ENCODE measurements at regions of chr12 and their contacts with region 1.

Region 1: DNA sequence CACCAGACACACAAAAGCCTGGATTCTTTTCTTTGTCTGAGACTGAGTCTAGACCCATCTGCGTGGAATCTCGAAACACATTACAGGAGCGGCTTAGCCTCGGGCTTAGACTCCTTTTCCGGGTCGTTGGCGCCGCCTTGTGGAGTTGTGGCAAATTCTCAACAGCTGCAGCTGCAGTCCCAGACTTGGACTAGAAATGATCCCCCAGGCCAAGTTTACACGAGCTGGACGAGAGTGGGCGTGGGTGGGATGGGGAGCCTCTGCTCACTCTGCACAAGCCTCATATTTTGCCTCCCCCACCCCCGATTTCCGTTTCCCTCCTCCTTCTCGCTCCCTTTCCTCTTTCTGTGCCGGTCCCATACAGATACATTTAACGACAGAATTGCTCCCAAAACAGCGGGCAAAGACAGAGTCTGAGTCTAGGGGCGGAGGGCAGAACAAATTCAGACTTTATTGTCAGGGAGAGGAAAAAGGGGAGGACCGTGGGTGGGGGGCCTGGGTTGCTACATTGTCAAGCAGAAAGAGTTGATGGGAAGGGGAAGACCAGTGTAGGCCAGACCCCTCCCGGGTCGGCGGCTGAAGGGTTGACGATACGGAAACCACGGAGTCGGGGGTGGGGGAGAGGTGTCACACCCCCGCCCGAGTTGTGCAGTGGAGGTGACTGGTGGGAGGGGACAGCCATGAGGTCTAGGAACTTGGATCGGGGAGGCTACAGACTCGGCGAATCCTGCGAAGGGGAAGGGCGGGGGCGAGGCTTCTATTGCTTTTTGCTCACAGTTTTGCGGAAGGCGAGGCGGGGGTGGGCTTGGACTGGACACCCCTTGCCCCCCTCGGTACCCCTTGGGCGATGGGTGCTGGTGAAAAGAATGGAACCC is 4.7 kb upstream of the GPR84 start:
- DNase-seq: peak; percentile 62 to 94
- H3K4me3 ChIP-seq: peak overlapping the region; percentile 43 to 65
- H3K27ac ChIP-seq: peak overlapping the region; percentile 39 to 60
- H3K4me1 ChIP-seq: peaks cover 4 to 22% of the 10 kb centered on the region in 2 donors
- H3K27me3 ChIP-seq: no peaks in the 10 kb centered on the region
- CTCF ChIP-seq: peak; percentile 82 to 90 (median 86)

Region 2: GRCh38 chr12:54259194-54260011 is 109.5 kb before region 1 on chr12:
- intact Hi-C with region 1: loop called (anchors 10 kb)
- DNase-seq: peak; percentile 38 to 89
- H3K4me3 ChIP-seq: peak overlapping the region; percentile 46 to 58
- H3K27ac ChIP-seq: peak overlapping the region; percentile 68 to 84
- H3K4me1 ChIP-seq: peaks cover 0 to 36% of the 10 kb centered on the region in 2 donors
- H3K27me3 ChIP-seq: no peaks in the 10 kb centered on the region
- CTCF ChIP-seq: no peak

Region 3: GRCh38 chr12:54294152-54294952 is 74.6 kb before region 1 on chr12:
- intact Hi-C with region 1: loop called (anchors 2 kb)
- DNase-seq: peak in 1 of 2 donors; percentile 72
- H3K4me3 ChIP-seq: no peak overlapping the region
- H3K27ac ChIP-seq: no peak overlapping the region
- H3K4me1 ChIP-seq: no peaks in the 10 kb centered on the region
- H3K27me3 ChIP-seq: no peaks in the 10 kb centered on the region
- CTCF ChIP-seq: peak; percentile 60 to 77 (median 70)

Region 4: DNA sequence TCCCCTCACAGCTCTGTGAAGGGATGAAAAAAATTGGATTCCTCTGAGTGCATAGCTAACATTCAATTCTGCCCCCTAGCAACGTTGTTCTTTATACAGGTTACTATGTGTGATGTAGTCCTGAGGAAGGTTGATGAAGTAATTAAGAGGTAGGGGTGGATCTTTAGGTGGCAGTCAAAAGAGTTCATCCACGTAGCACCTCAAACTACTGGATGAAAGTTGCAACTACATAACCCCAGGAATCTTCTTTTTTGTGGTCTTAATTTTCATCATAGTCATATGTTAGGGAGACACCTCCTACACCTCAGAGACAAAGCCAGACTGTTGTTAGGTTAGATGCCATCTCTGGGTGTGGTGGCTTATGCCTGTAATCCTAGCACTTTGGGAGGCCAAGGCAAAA is 57.9 kb before region 1 on chr12:
- intact Hi-C with region 1: no loop called
- DNase-seq: no peak
- H3K4me3 ChIP-seq: no peak overlapping the region
- H3K27ac ChIP-seq: no peak overlapping the region
- H3K4me1 ChIP-seq: no peaks in the 10 kb centered on the region
- H3K27me3 ChIP-seq: no peaks in the 10 kb centered on the region
- CTCF ChIP-seq: no peak

Region 5: GRCh38 chr12:54379401-54380201 is 10.7 kb after region 1 on chr12:
- intact Hi-C with region 1: loop called (anchors 1 kb)
- DNase-seq: peak in 1 of 2 donors; percentile 94
- H3K4me3 ChIP-seq: peak overlapping the region; percentile 42 to 75
- H3K27ac ChIP-seq: peak overlapping the region in 1 of 2 donors; percentile 75
- H3K4me1 ChIP-seq: peaks cover 3 to 4% of the 10 kb centered on the region in 2 donors
- H3K27me3 ChIP-seq: no peaks in the 10 kb centered on the region
- CTCF ChIP-seq: peak; percentile 99 to 100 (median 100)

Region 6: DNA sequence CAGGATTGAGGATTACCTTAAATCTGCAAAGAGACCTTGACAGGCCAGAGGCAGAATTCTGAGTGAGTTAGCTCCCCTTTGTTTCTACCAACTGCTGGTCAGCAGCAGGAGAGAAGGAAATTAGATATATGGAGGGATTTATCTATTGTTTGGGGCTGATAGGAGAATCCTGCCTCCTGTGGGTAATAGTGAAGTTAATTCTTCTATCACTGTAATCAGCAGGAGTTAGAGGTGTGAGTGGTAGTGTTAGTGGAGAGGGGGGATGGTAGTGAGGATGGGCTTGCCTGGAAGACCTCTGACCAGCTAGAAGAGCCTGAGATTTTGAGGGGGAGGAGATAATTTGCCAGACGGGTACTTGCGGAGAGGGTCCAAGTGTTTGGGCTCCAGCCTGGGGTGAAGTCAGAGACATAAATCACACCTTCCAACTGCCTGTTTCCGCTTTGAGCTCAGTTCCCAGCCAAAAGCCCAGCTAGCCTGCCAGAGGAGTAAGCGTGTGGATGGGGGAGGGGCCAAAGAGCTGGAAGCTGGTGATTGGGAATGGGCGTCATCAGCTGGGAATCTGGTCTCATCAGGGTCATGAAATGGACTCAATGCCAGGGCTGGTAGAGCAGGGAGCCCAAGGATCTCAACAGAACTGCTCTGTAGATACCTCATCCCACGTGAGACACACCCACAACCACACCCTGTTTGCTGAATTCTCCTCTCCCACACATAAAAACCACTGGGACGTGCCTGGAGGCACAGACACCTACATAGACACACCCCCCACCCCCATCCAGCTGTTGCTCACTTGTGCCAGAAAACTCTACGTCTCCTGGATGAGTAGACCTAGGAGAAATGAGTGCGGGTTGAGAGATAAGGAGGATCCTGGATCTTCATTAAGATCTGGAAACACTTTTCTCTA is 63.2 kb after region 1 on chr12:
- intact Hi-C with region 1: no loop called
- DNase-seq: peak; percentile 79 to 96
- H3K4me3 ChIP-seq: peak overlapping the region in 1 of 2 donors; percentile 36
- H3K27ac ChIP-seq: peak overlapping the region; percentile 97
- H3K4me1 ChIP-seq: peaks cover 23 to 51% of the 10 kb centered on the region in 2 donors
- H3K27me3 ChIP-seq: no peaks in the 10 kb centered on the region
- CTCF ChIP-seq: no peak

Region 7: DNA sequence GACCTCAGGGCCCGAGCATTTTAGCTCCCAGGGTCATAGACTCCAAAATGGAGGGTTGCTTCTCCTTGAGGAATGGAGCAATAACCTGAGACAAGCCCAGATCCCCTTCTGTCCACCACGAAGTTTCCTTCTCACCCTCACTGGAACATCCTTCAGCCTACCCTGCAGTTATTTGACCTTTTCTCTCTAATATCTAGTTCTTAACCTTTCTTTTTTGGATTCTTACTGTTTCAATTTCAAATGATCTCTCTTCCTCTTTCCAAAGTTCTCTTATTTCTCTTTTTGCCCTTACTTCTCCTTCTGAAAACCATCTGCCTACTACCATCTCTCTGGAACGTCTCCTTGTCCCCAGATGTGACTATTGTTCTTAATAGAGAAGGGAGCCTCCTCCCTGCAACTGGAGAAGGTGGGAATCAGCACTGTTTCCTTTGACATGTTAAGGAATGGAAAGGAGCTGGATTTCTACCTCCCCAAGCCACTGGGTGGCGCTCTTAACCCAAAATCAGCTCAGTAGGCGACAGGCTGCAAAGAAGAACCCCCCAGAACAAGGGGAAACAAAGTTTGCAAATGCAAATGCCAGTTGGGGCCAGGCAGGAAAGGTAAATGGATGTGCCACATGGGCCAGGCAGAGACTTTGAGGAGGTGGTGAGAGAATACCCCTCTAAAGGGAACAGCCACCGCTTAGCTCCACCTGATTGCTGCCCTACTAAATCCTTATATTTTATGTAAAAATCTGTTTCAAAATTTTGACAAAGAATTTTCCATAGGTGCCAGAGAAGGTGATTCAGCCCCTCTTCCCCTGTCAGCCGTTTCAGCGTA is 158.1 kb after region 1 on chr12:
- intact Hi-C with region 1: no loop called
- DNase-seq: peak in 1 of 2 donors; percentile 67
- H3K4me3 ChIP-seq: no peak overlapping the region
- H3K27ac ChIP-seq: no peak overlapping the region
- H3K4me1 ChIP-seq: no peaks in the 10 kb centered on the region
- H3K27me3 ChIP-seq: no peaks in the 10 kb centered on the region
- CTCF ChIP-seq: peak; percentile 38 to 62 (median 51)